K562 (cell line): ENCODE measurements at regions of chr3 and their contacts with region 1.

Region 1: DNA sequence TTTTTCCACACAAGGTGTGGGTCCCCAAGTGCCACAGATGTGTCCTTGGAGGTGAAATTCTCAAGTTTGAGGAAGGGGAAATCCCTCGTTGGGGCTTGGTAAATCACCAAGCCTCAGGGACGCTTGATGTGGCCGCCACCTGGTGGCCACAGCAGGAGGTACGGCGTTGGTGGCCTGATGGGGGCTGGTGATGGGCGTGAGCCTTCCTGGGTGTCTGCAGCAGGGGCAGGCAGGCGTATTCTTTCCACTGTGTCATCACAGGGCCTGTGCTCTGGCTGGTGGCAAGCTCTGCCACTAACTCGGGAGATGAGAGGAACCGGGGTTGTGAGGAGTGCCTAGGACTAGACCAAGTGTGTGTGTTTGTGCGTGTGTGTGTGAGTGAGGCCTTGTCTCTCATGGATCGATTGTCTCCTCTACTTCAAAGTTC is 4.2 kb downstream of the ACOX2 start:
- DNase-seq: peak; percentile 72 to 79 (median 74)
- ATAC-seq: peak; percentile 95
- H3K4me3 ChIP-seq: no peak overlapping the region
- H3K27ac ChIP-seq: no peak overlapping the region
- H3K4me1 ChIP-seq: peaks cover 7 to 13% of the 10 kb centered on the region in 2 experiments; a peak in 3 of 5 replicates
- H3K27me3 ChIP-seq: peaks cover 0 to 5% of the 10 kb centered on the region in 2 experiments; a peak in 1 of 5 replicates
- CTCF ChIP-seq: peak; percentile 85 to 89 (median 89)
- EP300 ChIP-seq: no peak
- POLR2A ChIP-seq: no peak
- RAD21 ChIP-seq: peak; percentile 79 to 89

Region 2: GRCh38 chr3:58188173-58188564 is 344.6 kb before region 1 on chr3:
- CTCF ChIA-PET with region 1: interaction called, 3 read pairs
- POLR2A ChIA-PET with region 1: no interaction called
- in situ Hi-C with region 1: loop called (anchors 10 kb)
- intact Hi-C with region 1: loop called (anchors 5 kb)
- DNase-seq: no peak
- ATAC-seq: no peak
- H3K4me3 ChIP-seq: no peak overlapping the region
- H3K27ac ChIP-seq: no peak overlapping the region
- H3K4me1 ChIP-seq: peaks cover 4 to 16% of the 10 kb centered on the region in 2 experiments
- H3K27me3 ChIP-seq: no peaks in the 10 kb centered on the region
- CTCF ChIP-seq: no peak
- EP300 ChIP-seq: no peak
- POLR2A ChIP-seq: no peak
- RAD21 ChIP-seq: no peak

Region 3: GRCh38 chr3:58317811-58318210 is 215.0 kb before region 1 on chr3:
- CTCF ChIA-PET with region 1: interaction called, 3 read pairs
- POLR2A ChIA-PET with region 1: no interaction called
- in situ Hi-C with region 1: loop called (anchors 5 kb)
- intact Hi-C with region 1: loop called (anchors 5 kb)
- DNase-seq: no peak
- ATAC-seq: no peak
- H3K4me3 ChIP-seq: no peak overlapping the region
- H3K27ac ChIP-seq: no peak overlapping the region
- H3K4me1 ChIP-seq: peaks cover 0 to under 1% of the 10 kb centered on the region in 2 experiments; a peak in 2 of 5 replicates
- H3K27me3 ChIP-seq: no peaks in the 10 kb centered on the region
- CTCF ChIP-seq: no peak
- EP300 ChIP-seq: no peak
- POLR2A ChIP-seq: no peak
- RAD21 ChIP-seq: no peak

Region 4: GRCh38 chr3:58419780-58420507 is 112.9 kb before region 1 on chr3:
- CTCF ChIA-PET with region 1: interaction called, 9 read pairs
- POLR2A ChIA-PET with region 1: interaction called, 3 read pairs
- in situ Hi-C with region 1: loop called (anchors 5 kb)
- intact Hi-C with region 1: loop called (anchors 2 kb)
- DNase-seq: peak in 2 of 4 experiments; percentile 12 to 17
- ATAC-seq: no peak
- H3K4me3 ChIP-seq: no peak overlapping the region
- H3K27ac ChIP-seq: no peak overlapping the region
- H3K4me1 ChIP-seq: no peaks in the 10 kb centered on the region; a peak in 1 of 5 replicates
- H3K27me3 ChIP-seq: no peaks in the 10 kb centered on the region
- CTCF ChIP-seq: no peak
- EP300 ChIP-seq: no peak
- POLR2A ChIP-seq: no peak
- RAD21 ChIP-seq: no peak

Region 5: GRCh38 chr3:58463181-58463941 is 69.4 kb before region 1 on chr3:
- CTCF ChIA-PET with region 1: interaction called, 7 read pairs
- POLR2A ChIA-PET with region 1: no interaction called
- in situ Hi-C with region 1: no loop called
- intact Hi-C with region 1: loop called (anchors 1 kb)
- DNase-seq: peak; percentile 67 to 75 (median 70)
- ATAC-seq: peak; percentile 96
- H3K4me3 ChIP-seq: no peak overlapping the region
- H3K27ac ChIP-seq: no peak overlapping the region
- H3K4me1 ChIP-seq: peaks cover 0 to 2% of the 10 kb centered on the region in 2 experiments; a peak in 1 of 5 replicates
- H3K27me3 ChIP-seq: 0 out of 5 replicates have a peak, but pooled peaks cover 0 to 2% of the 10 kb centered on the region in 2 experiments
- CTCF ChIP-seq: peak; percentile 65 to 78 (median 74)
- EP300 ChIP-seq: no peak
- POLR2A ChIP-seq: no peak
- RAD21 ChIP-seq: peak; percentile 59 to 68

Region 6: GRCh38 chr3:58478781-58479180 is 54.0 kb before region 1 on chr3:
- CTCF ChIA-PET with region 1: no interaction called
- POLR2A ChIA-PET with region 1: no interaction called
- in situ Hi-C with region 1: no loop called
- intact Hi-C with region 1: no loop called
- DNase-seq: no peak
- ATAC-seq: no peak
- H3K4me3 ChIP-seq: no peak overlapping the region
- H3K27ac ChIP-seq: no peak overlapping the region
- H3K4me1 ChIP-seq: no peaks in the 10 kb centered on the region; a peak in 1 of 5 replicates
- H3K27me3 ChIP-seq: no peaks in the 10 kb centered on the region
- CTCF ChIP-seq: no peak
- EP300 ChIP-seq: no peak
- POLR2A ChIP-seq: no peak
- RAD21 ChIP-seq: no peak